ENCODE measurements at regions of chr11 and their contacts with region 1.

Region 1: GRCh38 chr11:117098269-117099232 is at the start of gene SIK3:
- DNase-seq: peak; percentile 53
- ATAC-seq: peak; percentile 69
- H3K4me3 ChIP-seq: peak within 1 kb of the TSS; percentile 96
- H3K27ac ChIP-seq: peak within 1 kb of the TSS; percentile 81
- H3K4me1 ChIP-seq: peaks cover 25% of the 10 kb centered on the region
- H3K27me3 ChIP-seq: no peaks in the 10 kb centered on the region
- CTCF ChIP-seq: 0 out of 6 replicates have a peak, but pooled peaks of 1 of the 3 experiments have one; percentile 1
- EP300 ChIP-seq: peak in 1 of 2 experiments; percentile 71; a peak in 2 of 4 replicates
- POLR2A ChIP-seq: peak; percentile 79
- RAD21 ChIP-seq: no peak
- polyA plus RNA-seq, gene SIK3: 2.5 to 2.6 TPM

Region 2: DNA sequence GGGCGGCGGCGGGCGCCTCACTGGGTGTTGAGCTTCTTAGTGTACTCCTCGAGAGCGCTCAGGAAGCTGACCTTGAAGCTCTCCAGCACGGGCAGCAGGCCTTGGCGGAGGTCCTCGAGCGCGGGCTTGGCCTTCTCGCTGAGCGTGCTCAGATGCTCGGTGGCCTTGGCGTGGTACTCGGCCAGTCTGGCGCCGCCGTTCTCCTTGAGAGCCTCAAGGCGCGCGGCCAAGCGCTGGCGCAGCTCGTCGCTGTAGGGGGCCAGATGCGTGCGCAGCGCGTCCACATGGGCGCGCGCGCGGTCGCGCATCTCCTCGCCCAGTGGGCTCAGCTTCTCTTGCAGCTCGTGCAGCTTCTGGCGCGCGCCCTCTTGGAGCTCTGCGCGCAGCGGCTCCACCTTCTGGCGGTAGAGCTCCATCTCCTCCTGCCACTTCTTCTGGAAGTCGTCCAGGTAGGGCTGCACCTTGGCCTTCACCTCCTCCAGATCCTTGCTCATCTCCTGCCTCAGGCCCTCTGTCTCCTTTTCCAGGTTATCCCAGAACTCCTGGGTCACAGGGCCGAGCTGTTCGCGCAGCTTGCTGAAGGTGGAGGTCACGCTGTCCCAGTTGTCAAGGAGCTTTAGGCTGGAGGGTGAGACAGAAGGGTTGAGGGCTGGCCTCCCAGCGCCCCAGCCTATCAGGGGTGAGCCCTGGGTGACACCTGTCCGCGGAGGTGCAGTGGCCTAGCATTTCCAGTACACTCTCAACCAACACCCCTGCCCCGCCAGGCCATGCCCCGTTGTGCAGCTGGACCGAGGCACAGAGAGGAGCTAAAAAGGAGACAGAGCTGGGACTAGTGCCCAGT is 262.5 kb before region 1 on chr11:
- CTCF ChIA-PET with region 1: interaction called, 31 read pairs
- POLR2A ChIA-PET with region 1: interaction called, 5 read pairs
- RAD21 ChIA-PET with region 1: interaction called, 4 read pairs
- SMC1A ChIA-PET with region 1: interaction called, 4 read pairs
- in situ Hi-C with region 1: no loop called
- intact Hi-C with region 1: no loop called
- DNase-seq: peak; percentile 57
- ATAC-seq: peak; percentile 94
- H3K4me3 ChIP-seq: peak overlapping the region; percentile 52; the same call in 1 of the 2 replicates
- H3K27ac ChIP-seq: peak overlapping the region; percentile 20; the same call in 1 of the 2 replicates
- H3K4me1 ChIP-seq: peaks cover 8% of the 10 kb centered on the region; the same call in 1 of the 2 replicates
- H3K27me3 ChIP-seq: no peaks in the 10 kb centered on the region
- CTCF ChIP-seq: peak; percentile 68 to 81 (median 75)
- EP300 ChIP-seq: no peak
- POLR2A ChIP-seq: peak; percentile 83
- RAD21 ChIP-seq: peak; percentile 60

Region 3: DNA sequence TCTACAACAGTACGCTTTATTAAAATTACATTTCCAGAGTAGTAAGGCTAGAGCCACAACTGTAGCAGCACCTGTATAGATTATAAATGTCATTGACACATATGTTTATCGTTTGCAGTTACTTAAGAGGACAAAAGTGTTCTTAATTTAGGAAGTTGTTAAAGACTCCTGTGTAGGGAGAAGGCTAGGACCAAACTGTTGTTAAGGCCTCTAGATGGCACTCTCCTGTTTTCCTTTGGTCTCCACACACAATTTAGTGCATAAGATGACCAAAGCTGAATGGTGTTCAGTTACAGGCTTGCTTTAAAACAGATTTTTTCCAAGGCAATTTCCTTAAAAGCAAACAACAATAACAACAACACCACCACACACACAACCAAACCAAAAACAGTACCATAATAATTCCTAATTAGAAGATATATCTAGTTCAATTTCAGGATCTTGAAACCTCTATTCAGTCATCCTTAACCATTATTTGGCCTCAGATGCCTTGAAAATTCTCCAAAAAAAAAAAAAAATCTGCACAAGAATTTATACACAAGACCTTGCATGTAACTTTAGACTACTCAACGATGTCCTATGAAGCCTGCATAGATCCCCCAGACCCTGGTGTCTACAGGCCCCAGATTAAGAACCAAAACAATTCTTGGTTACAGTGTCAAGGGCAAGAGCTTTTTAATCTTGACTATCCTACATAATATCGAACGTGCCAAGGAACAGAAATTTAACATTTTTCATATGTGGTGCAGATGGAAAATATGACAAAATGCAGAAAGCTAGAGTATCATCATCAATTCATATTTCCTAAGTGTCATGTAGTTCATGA is 218.5 kb before region 1 on chr11:
- CTCF ChIA-PET with region 1: interaction called, 12 read pairs
- POLR2A ChIA-PET with region 1: no interaction called
- RAD21 ChIA-PET with region 1: interaction called, 29 read pairs
- SMC1A ChIA-PET with region 1: interaction called, 166 read pairs
- in situ Hi-C with region 1: loop called (anchors 5 kb)
- intact Hi-C with region 1: no loop called
- DNase-seq: peak; percentile 42
- ATAC-seq: peak; percentile 96
- H3K4me3 ChIP-seq: no peak overlapping the region
- H3K27ac ChIP-seq: no peak overlapping the region
- H3K4me1 ChIP-seq: no peaks in the 10 kb centered on the region
- H3K27me3 ChIP-seq: no peaks in the 10 kb centered on the region
- CTCF ChIP-seq: peak; percentile 62 to 72 (median 71); a peak in 5 of 6 replicates
- EP300 ChIP-seq: no peak
- POLR2A ChIP-seq: no peak
- RAD21 ChIP-seq: peak; percentile 87

Region 4: GRCh38 chr11:116980136-116980793 is 118.3 kb before region 1 on chr11:
- CTCF ChIA-PET with region 1: interaction called, 3 read pairs
- POLR2A ChIA-PET with region 1: interaction called, 3 read pairs
- RAD21 ChIA-PET with region 1: interaction called, 5 read pairs
- SMC1A ChIA-PET with region 1: interaction called, 5 read pairs
- in situ Hi-C with region 1: no loop called
- intact Hi-C with region 1: loop called (anchors 2 kb)
- DNase-seq: peak; percentile 71
- ATAC-seq: peak; percentile 98
- H3K4me3 ChIP-seq: peak overlapping the region; percentile 51; the same call in 1 of the 2 replicates
- H3K27ac ChIP-seq: peak overlapping the region; percentile 73
- H3K4me1 ChIP-seq: peaks cover 29% of the 10 kb centered on the region
- H3K27me3 ChIP-seq: no peaks in the 10 kb centered on the region
- CTCF ChIP-seq: no peak
- EP300 ChIP-seq: no peak; a peak in 1 of 4 replicates
- POLR2A ChIP-seq: no peak
- RAD21 ChIP-seq: no peak

Region 5: DNA sequence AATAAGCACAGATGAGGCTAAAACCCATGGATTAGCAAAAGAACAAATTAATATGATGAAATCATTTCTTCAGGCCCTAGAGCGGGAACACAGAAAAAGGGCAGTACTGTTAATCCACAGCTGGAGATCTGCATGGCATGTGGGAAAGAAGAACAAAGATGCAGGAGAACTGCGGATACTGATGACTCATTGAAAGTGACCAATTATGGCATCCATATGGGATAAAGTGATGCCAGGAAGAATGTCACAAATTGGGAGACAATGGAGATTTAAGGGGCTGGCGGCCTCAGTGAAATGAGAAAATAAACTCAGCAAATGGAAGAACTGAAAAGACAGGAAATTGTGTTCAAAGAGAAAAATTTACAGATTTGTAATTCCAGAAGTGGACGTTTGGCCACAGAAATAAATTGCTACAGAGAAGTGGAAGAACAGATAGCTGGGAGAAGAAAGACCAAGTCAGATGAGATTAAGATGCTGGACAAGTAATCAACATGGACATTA is 39.7 kb before region 1 on chr11:
- CTCF ChIA-PET with region 1: interaction called, 11 read pairs
- POLR2A ChIA-PET with region 1: interaction called, 17 read pairs
- RAD21 ChIA-PET with region 1: interaction called, 41 read pairs
- SMC1A ChIA-PET with region 1: interaction called, 28 read pairs
- in situ Hi-C with region 1: no loop called
- intact Hi-C with region 1: loop called (anchors 1 kb)
- DNase-seq: no peak
- ATAC-seq: no peak
- H3K4me3 ChIP-seq: no peak overlapping the region
- H3K27ac ChIP-seq: no peak overlapping the region
- H3K4me1 ChIP-seq: peaks cover 32% of the 10 kb centered on the region
- H3K27me3 ChIP-seq: no peaks in the 10 kb centered on the region
- CTCF ChIP-seq: no peak
- EP300 ChIP-seq: no peak
- POLR2A ChIP-seq: no peak
- RAD21 ChIP-seq: no peak

Region 6: DNA sequence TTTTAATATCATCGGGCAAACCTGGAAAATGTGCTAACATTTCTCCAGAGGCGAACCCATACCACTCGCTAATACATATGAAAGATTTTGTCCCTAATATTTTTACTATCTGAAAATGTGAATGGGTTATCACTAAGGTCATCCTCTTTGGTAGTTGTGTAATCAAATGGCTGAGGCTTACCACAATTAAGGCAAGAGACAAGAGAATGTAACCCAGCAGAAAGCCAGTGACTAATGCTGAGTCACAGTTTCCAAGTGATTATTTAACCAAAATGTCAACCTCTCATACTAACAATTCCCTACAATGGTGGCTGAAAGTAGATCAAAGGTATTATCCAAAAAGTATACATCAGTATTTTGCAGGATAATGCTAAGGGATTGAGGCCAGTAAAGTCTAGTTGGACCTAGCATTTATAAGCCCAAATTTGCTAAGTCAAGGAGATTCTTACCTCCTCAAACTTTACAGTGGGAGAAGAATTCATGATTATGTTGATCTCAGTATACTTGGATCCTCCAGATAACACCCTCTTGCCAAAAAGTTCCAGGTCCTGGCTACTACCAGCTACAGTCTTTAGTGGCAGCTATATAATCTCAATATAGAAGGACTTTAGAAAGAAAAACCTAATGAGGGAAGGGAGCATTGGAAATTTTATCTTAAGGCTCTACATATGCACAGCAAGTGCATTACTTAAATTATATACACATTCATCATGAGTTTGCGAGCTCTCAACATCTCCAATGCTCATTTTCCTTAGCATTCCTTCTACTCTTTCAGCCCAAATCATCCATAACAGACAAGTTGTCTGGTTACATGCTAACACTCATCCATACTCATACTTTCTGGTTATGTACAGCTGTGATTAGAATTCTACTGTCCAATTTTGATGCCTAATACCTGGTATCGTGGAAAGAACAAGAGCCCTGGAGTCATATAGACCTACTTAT is 25.8 kb before region 1 on chr11:
- CTCF ChIA-PET with region 1: interaction called, 10 read pairs
- POLR2A ChIA-PET with region 1: interaction called, 13 read pairs
- RAD21 ChIA-PET with region 1: interaction called, 22 read pairs
- SMC1A ChIA-PET with region 1: interaction called, 73 read pairs
- in situ Hi-C with region 1: no loop called
- intact Hi-C with region 1: no loop called
- DNase-seq: peak; percentile 45
- ATAC-seq: peak; percentile 70
- H3K4me3 ChIP-seq: no peak overlapping the region
- H3K27ac ChIP-seq: no peak overlapping the region
- H3K4me1 ChIP-seq: peaks cover 38% of the 10 kb centered on the region
- H3K27me3 ChIP-seq: no peaks in the 10 kb centered on the region
- CTCF ChIP-seq: no peak
- EP300 ChIP-seq: no peak
- POLR2A ChIP-seq: no peak
- RAD21 ChIP-seq: no peak

Region 7: DNA sequence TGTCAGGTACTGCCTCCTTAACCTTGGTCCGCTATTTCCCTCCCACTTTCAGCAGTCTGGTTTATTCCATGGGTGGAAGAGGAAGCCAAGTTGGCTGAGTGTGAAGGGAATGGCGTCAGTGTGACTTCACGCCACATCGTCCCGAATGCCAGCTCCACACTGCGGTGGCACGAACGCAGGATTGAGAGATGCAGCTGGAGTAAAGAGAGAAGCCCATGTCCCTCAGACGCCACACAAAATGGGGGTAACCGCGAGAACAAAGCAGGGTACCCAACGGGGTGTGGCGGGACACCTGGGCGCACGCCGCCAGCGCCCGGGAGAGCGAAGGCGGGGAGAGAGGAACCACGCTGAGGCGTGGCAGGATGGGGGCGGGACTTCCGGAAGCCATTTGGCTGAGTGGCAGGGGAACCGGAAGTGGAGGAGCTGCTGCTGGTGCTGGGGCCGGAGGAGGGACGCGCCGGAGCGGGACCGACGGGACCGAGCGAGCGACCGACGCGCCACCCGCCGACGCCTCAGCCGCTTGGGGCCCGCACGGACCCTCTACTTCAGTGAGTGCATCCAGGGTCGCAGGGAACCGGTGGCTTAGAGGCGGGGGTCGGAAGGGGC is 45.4 kb after region 1 on chr11 and contains the start of gene PAFAH1B2:
- CTCF ChIA-PET with region 1: no interaction called
- POLR2A ChIA-PET with region 1: no interaction called
- RAD21 ChIA-PET with region 1: no interaction called
- SMC1A ChIA-PET with region 1: no interaction called
- in situ Hi-C with region 1: no loop called
- intact Hi-C with region 1: no loop called
- DNase-seq: peak; percentile 82
- ATAC-seq: peak; percentile 96
- H3K4me3 ChIP-seq: peak within 1 kb of the TSS; percentile 92
- H3K27ac ChIP-seq: peak within 1 kb of the TSS; percentile 80
- H3K4me1 ChIP-seq: peaks cover 7% of the 10 kb centered on the region
- H3K27me3 ChIP-seq: no peaks in the 10 kb centered on the region
- CTCF ChIP-seq: no peak
- EP300 ChIP-seq: no peak
- POLR2A ChIP-seq: peak; percentile 82
- RAD21 ChIP-seq: no peak
- polyA plus RNA-seq, gene PAFAH1B2: 17.6 to 64.8 TPM

Measured in GM12878 (cell line).